ENCODE measurements at regions of chr1 and their contacts with region 1.

Region 1: GRCh38 chr1:33472349-33472980 is at the start of gene ZSCAN20:
- DNase-seq: peak; percentile 98 to 99
- ATAC-seq: peak; percentile 94 to 95 (median 95)
- H3K4me3 ChIP-seq: peak within 1 kb of the TSS; percentile 67
- H3K27ac ChIP-seq: peak within 1 kb of the TSS; percentile 73
- H3K4me1 ChIP-seq: peaks cover 20% of the 10 kb centered on the region
- H3K27me3 ChIP-seq: no peaks in the 10 kb centered on the region
- CTCF ChIP-seq: no peak
- total RNA-seq, gene ZSCAN20: 2.0 to 4.9 (median 3.3) TPM

Region 2: DNA sequence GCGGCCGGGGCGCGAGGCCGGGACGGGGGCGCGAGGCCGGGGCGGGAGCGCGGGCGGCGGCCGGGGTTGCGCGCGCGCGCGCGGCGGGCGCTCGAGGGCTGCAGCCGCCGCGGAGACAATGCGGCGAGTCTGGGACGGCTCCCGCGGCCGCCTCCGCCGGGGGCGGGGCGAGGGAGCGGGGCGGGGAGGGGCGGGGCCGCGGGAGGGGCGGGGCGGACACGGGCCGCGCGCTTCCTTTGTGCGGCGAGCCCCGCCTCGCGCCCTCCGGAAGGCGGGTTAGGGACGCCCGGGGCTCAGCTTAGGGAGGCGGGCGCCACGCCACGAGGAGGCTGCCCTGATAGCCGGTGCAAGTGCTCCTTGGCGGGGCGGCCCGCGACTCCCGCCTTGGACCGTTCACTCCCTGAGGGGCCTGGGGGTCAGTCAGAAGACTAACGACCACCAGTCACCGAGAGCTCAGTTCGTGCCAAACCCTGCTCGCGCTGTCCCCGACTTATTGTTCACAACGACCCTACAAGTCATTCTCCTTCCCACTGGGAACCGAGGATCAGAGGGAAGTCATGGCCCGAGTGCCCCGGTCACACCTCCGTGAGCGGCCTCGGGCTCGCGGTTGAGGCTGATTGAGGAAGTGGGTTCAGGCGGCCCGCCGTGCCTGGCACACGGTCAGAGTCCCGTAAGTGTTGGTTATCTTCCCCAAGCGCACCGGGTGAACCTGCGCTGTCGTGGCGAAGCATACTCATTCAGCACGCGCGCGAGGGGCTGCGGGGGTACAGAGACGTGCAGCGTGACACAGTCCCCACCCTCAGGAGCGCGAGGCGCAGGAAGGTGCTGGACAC is 122.5 kb before region 1 on chr1:
- intact Hi-C with region 1: loop called in 1 of 2 experiments (anchors 1 kb)
- DNase-seq: peak; percentile 92 to 95
- ATAC-seq: peak; percentile 72 to 81 (median 79)
- H3K4me3 ChIP-seq: peak overlapping the region; percentile 85
- H3K27ac ChIP-seq: peak overlapping the region; percentile 98
- H3K4me1 ChIP-seq: peaks cover 35% of the 10 kb centered on the region
- H3K27me3 ChIP-seq: no peaks in the 10 kb centered on the region
- CTCF ChIP-seq: no peak

Region 3: GRCh38 chr1:33384040-33384812 is 88.2 kb before region 1 on chr1:
- intact Hi-C with region 1: loop called in 1 of 2 experiments (anchors 5 kb)
- DNase-seq: no peak
- ATAC-seq: peak in 3 of 4 donors; percentile 42 to 63 (median 46)
- H3K4me3 ChIP-seq: no peak overlapping the region
- H3K27ac ChIP-seq: peak overlapping the region; percentile 5
- H3K4me1 ChIP-seq: peaks cover 34% of the 10 kb centered on the region
- H3K27me3 ChIP-seq: no peaks in the 10 kb centered on the region
- CTCF ChIP-seq: no peak

Region 4: GRCh38 chr1:33541966-33542365 is 69.5 kb after region 1 on chr1:
- intact Hi-C with region 1: no loop called
- DNase-seq: no peak
- ATAC-seq: no peak
- H3K4me3 ChIP-seq: no peak overlapping the region
- H3K27ac ChIP-seq: no peak overlapping the region
- H3K4me1 ChIP-seq: no peaks in the 10 kb centered on the region
- H3K27me3 ChIP-seq: no peaks in the 10 kb centered on the region
- CTCF ChIP-seq: no peak

Region 5: GRCh38 chr1:33616773-33617172 is 144.3 kb after region 1 on chr1:
- intact Hi-C with region 1: loop called (anchors 5 to 10 kb)
- DNase-seq: no peak
- ATAC-seq: no peak
- H3K4me3 ChIP-seq: no peak overlapping the region
- H3K27ac ChIP-seq: no peak overlapping the region
- H3K4me1 ChIP-seq: no peaks in the 10 kb centered on the region
- H3K27me3 ChIP-seq: no peaks in the 10 kb centered on the region
- CTCF ChIP-seq: no peak

Measured in psoas muscle (tissue), 8 donors.